Right cardiac atrium (tissue), 5 donors: ENCODE measurements at regions of chr1 and their contacts with region 1.

Region 1: GRCh38 chr1:28877132-28877781 is 37.1 kb upstream of the EPB41 start:
- DNase-seq: peak; percentile 71 to 84 (median 81)
- ATAC-seq: peak; percentile 78 to 83
- H3K4me3 ChIP-seq: no peak overlapping the region
- H3K27ac ChIP-seq: no peak overlapping the region
- H3K4me1 ChIP-seq: no peaks in the 10 kb centered on the region
- H3K27me3 ChIP-seq: no peaks in the 10 kb centered on the region

Region 2: DNA sequence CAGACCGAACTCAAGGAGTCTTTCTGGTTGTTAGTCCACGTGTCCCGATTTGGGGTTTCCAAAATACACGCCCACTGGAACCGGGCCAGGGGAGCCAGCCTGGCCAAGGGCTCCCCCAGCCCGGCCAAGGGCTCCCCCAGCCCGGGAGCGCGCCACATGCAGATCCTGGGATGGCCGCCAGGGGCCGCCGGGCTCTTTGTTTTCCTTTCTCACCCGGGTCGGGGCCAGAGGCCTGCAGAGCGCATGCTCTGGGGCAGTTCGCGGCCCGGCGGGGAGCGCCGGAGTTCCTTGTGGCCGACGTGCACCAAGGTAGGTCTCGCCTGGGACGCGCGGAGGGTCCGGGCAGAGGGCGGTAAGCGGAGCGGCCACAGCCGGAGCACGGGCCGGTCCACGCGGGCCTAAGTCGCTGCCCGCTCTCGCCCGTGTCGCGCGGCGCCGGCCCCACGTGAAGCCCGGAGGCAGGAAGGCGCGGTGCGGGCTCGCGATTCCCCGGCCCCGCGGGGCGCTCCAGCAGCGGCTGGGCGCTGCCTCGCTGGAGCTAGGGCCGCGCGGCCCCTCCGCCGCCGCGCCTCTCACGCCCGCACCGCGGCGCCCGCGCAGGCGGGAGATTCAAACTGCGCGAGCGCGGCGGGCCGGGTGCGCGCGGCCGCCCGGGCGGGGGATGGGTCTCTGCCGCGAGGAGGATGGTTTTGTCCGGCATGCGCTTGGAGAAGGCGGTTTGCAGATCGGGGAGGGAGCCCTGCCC is 359.1 kb before region 1 on chr1:
- intact Hi-C with region 1: loop called in 1 of 4 experiments (anchors 5 kb)
- DNase-seq: peak; percentile 91 to 97 (median 96)
- ATAC-seq: peak; percentile 90 to 95
- H3K4me3 ChIP-seq: peak overlapping the region; percentile 71
- H3K27ac ChIP-seq: peak overlapping the region; percentile 74
- H3K4me1 ChIP-seq: peaks cover 4% of the 10 kb centered on the region
- H3K27me3 ChIP-seq: no peaks in the 10 kb centered on the region

Region 3: GRCh38 chr1:28668956-28669723 is 208.1 kb before region 1 on chr1:
- intact Hi-C with region 1: no loop called
- DNase-seq: peak; percentile 70 to 88 (median 88)
- ATAC-seq: peak; percentile 83 to 86
- H3K4me3 ChIP-seq: peak overlapping the region; percentile 99
- H3K27ac ChIP-seq: peak overlapping the region; percentile 96
- H3K4me1 ChIP-seq: peaks cover 3% of the 10 kb centered on the region
- H3K27me3 ChIP-seq: no peaks in the 10 kb centered on the region

Region 4: DNA sequence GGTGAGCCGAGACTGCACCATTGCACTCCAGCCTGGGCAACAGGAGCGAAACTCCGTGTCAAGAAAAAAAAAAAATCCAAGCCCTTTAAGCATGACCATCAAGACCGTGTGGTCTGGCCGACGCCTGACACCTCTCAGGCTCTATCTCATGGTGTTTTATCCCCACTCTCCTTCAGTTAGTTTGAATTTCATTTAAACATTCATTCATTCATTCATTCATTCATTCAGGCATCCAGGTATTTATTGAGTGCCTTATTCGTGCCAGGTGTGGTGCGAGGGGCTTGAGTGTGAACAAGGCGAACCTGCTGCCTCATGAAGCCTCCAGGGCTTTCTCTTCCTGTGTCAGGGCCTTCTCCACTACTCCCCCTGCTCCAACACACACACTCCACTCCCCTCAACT is 87.8 kb before region 1 on chr1:
- intact Hi-C with region 1: loop called (anchors 1 to 5 kb)
- DNase-seq: no peak
- ATAC-seq: no peak
- H3K4me3 ChIP-seq: no peak overlapping the region
- H3K27ac ChIP-seq: no peak overlapping the region
- H3K4me1 ChIP-seq: no peaks in the 10 kb centered on the region
- H3K27me3 ChIP-seq: no peaks in the 10 kb centered on the region